ENCODE measurements at regions of chr6 and their contacts with region 1.

Region 1: DNA sequence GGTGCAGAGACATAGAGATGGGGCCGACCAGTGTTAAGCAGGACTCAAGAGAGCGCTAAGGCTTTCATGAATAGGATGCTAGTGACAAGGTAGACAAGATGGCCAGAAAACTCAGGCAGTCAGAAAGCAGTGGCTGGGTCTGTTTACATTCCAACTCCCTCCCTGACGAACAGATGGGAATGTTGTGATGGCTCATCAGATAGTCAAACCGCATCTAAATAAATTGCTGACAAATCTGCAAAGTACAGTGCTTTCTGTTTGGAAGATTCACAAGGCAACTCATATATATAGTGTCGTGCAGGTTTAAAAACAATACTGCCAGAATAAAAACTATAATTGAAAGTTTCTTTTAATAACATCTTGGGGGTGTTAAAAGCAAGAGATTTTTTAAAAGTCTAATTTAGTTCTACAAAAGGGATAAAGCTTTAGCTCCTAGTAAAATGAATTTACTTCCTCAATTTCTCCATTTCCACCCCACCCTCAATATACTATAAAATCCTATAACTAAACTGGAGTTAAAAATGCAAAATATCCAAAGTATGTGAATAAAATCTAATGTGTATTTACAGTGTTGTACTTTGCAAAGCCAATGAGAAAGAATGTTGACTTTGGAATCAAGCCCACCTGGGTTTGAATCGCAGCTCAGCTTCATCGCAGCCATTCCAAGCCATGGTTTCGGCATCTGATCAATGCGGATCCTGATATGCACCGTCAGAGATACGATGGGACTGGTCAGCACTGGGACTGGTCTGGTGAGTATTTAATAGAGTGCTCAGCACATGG is 247.3 kb upstream of the PDE10A start:
- DNase-seq: peak; percentile 82
- ATAC-seq: peak; percentile 77
- H3K4me3 ChIP-seq: no peak overlapping the region
- H3K27ac ChIP-seq: no peak overlapping the region; the same call in 1 of the 2 replicates
- H3K4me1 ChIP-seq: peaks cover 9% of the 10 kb centered on the region
- H3K27me3 ChIP-seq: no peaks in the 10 kb centered on the region
- CTCF ChIP-seq: no peak
- POLR2A ChIP-seq: no peak
- RAD21 ChIP-seq: no peak

Region 2: GRCh38 chr6:165920896-165921671 is 10.7 kb after region 1 on chr6:
- CTCF ChIA-PET with region 1: no interaction called
- POLR2A ChIA-PET with region 1: no interaction called
- dilution Hi-C with region 1: no loop called
- in situ Hi-C with region 1: no loop called
- intact Hi-C with region 1: loop called (anchors 1 kb)
- DNase-seq: peak; percentile 72
- ATAC-seq: peak; percentile 44
- H3K4me3 ChIP-seq: no peak overlapping the region
- H3K27ac ChIP-seq: peak overlapping the region; percentile 48
- H3K4me1 ChIP-seq: peaks cover 17% of the 10 kb centered on the region
- H3K27me3 ChIP-seq: no peaks in the 10 kb centered on the region
- CTCF ChIP-seq: no peak
- POLR2A ChIP-seq: no peak
- RAD21 ChIP-seq: no peak